Aorta (tissue), 5 donors: ENCODE measurements at regions of chr10 and their contacts with region 1.

Region 1: GRCh38 chr10:95406651-95407280 is 116.0 kb upstream of the PDLIM1 start:
- DNase-seq: peak; percentile 88 to 89
- ATAC-seq: peak; percentile 77
- H3K4me3 ChIP-seq: no peak overlapping the region
- H3K27ac ChIP-seq: peak overlapping the region; percentile 77 to 83
- H3K4me1 ChIP-seq: peaks cover 5 to 8% of the 10 kb centered on the region in 2 donors
- H3K27me3 ChIP-seq: no peaks in the 10 kb centered on the region

Region 2: DNA sequence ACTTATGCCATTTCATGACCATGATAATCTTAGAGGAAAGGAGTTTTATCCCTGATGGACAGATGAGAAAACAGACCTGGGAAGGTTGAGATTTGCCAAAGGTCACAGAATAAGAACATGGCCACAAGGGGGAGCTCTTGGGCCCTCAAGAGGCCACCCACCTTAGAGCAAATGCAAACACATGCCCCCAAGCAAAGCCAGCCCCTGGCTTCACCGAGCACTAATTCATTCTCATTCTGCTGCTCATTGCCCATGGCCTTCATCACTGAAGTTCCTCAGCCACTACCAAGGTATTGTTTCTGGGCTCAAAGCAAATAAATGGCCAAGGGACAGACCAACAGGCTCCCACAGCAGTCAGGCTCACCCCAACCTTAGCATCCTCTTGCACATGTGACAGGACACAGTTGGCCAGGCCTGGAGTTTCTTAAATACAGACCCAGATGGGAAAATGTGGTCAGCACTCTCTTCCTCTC is 160.2 kb before region 1 on chr10:
- intact Hi-C with region 1: no loop called
- DNase-seq: peak; percentile 73 to 82
- ATAC-seq: peak; percentile 80
- H3K4me3 ChIP-seq: no peak overlapping the region
- H3K27ac ChIP-seq: peak overlapping the region; percentile 8 to 11
- H3K4me1 ChIP-seq: peaks cover 6 to 7% of the 10 kb centered on the region in 2 donors
- H3K27me3 ChIP-seq: no peaks in the 10 kb centered on the region

Region 3: DNA sequence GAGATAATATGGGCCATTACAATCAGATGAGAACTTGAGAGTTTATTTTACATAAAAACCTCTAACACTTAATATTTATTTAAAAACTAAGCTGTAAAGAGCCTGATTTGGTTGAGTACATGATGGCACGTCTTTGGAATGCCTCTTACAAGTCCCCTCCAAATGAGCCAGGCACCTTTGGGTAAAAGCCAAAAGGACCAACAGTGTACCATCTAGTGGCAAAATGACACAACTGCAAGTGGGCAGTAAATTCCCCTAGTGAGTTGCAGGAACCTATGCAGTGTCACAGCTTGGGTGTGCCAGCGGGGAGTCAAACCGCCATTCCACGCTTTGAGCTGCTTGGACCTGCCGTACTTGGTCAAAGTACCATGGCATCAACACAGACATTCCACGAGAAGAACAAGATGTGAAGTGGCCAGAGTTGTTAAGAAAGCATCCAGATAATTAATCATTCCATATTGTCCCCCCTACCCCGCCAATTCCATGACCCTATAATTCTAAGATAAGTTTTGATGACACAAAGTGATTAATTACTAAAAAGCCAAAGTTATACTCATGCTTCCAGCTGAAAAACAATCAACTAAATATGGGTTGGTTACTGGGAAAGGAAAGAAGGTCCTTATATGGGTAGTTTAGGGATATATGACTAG is 39.2 kb after region 1 on chr10:
- intact Hi-C with region 1: loop called in 1 of 2 experiments (anchors 5 kb)
- DNase-seq: peak; percentile 79 to 85
- ATAC-seq: peak; percentile 87
- H3K4me3 ChIP-seq: no peak overlapping the region
- H3K27ac ChIP-seq: peak overlapping the region; percentile 98 to 99
- H3K4me1 ChIP-seq: peaks cover 10 to 14% of the 10 kb centered on the region in 2 donors
- H3K27me3 ChIP-seq: no peaks in the 10 kb centered on the region